SK-N-SH (cell line): ENCODE measurements at regions of chr17 and their contacts with region 1.

Region 1: GRCh38 chr17:31842183-31843069 is 16.6 kb downstream of the COPRS start:
- DNase-seq: peak; percentile 85
- H3K4me3 ChIP-seq: no peak overlapping the region; a peak in 1 of 4 replicates
- H3K27ac ChIP-seq: peak overlapping the region; percentile 28 to 53; a peak in 3 of 4 replicates
- H3K4me1 ChIP-seq: peaks cover 4 to 11% of the 10 kb centered on the region in 2 experiments; a peak in 2 of 4 replicates
- H3K27me3 ChIP-seq: no peaks in the 10 kb centered on the region
- CTCF ChIP-seq: peak; percentile 97
- EP300 ChIP-seq: no peak
- RAD21 ChIP-seq: peak; percentile 98

Region 2: DNA sequence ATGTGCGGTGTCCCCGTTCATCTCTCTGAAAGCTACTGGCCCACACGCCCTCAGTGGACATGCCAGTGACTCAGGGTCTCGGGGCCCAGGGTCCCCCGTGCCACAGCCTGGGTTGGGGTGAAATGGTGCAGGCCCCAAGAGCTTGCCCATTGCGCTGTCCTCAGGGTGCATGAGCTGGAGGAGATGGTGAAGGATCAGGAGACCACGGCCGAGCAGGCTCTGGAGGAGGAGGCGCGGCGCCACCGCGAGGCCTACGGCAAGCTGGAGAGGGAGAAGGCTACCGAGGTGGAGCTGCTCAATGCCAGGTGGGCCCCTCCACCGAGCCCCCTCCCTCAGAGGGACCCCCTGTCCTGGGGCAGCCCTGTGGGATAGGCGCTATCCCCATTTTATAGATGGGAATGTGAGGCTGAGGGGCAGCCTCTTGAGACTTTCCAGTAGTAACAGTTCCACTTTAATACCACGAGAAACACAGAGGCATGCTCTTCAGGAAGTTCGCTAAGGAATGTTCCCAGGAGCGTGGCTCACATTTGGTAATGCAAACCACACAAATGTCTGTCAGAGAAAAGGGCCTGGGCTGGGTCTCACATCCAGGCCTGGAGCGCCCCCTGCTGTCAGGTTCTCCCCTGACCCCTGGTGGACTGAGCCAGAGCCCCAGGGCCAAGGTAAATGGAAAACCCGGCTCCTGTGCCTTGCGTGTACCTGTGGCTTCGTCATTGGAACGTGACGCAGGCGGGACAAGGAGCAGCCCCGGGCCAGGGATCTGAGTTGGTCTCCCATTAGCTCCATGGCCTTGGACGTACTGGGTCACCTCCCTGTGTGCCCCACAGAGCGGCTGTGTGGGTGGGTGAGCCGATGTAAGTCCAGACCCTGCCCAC is 317.3 kb before region 1 on chr17:
- CTCF ChIA-PET with region 1: interaction called, 137 read pairs
- POLR2A ChIA-PET with region 1: no interaction called
- DNase-seq: peak; percentile 91
- H3K4me3 ChIP-seq: no peak overlapping the region; a peak in 1 of 4 replicates
- H3K27ac ChIP-seq: 0 out of 4 replicates have a peak overlapping the region, but pooled peaks of 1 of the 2 experiments have one; percentile 18
- H3K4me1 ChIP-seq: peaks cover 3 to 12% of the 10 kb centered on the region in 2 experiments; a peak in 1 of 4 replicates
- H3K27me3 ChIP-seq: no peaks in the 10 kb centered on the region
- CTCF ChIP-seq: peak; percentile 89
- EP300 ChIP-seq: no peak
- RAD21 ChIP-seq: peak; percentile 93

Region 3: DNA sequence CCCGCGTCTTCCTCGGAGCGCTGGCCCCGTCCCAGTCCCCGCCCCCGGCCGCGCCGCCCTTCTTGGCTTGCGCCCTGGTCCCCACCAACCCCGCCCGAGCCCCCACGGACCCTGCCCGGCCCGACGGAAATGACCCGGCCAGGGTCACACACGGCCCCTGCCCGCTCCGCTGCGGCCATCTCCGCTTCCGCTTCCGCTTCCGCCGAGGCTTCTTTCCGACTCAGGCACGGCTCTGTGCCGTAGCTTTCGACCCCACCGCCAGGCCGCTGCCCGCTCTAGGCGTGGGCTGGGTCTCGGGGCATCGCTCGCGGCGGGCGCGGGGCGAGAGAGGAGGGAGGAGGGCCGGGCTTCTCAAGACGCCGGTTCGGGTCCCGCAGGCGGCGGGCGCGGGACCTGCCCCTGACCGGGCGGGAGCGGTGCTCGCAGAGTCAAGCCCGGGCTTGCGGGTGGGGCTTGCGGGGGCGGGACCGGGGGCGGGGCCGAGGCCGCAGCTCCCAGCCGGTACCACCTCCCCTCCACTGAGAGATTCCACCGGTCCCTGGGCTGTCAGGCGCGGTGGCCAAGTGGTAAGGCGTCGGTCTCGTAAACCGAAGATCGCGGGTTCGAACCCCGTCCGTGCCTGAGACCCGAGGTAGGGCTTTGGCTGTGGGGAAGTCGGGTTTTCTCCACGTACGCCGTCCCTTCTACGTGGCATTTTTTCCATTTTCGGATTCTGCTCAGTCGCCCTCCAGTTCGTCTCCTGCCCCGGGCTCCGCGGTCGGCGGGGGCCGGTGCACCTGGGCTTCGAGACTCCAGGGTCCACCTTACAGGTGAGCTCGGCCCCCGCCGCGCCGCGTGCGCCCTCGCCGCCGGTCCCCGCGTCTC is 292.7 kb before region 1 on chr17:
- CTCF ChIA-PET with region 1: interaction called, 338 read pairs
- POLR2A ChIA-PET with region 1: interaction called, 3 read pairs
- DNase-seq: peak; percentile 98
- H3K4me3 ChIP-seq: peak overlapping the region; percentile 79 to 93
- H3K27ac ChIP-seq: peak overlapping the region; percentile 74 to 92
- H3K4me1 ChIP-seq: no peaks in the 10 kb centered on the region
- H3K27me3 ChIP-seq: no peaks in the 10 kb centered on the region
- CTCF ChIP-seq: no peak
- EP300 ChIP-seq: peak in 1 of 2 experiments; percentile 15; a peak in 2 of 4 replicates
- RAD21 ChIP-seq: no peak

Region 4: GRCh38 chr17:31581022-31581490 is 261.4 kb before region 1 on chr17:
- CTCF ChIA-PET with region 1: interaction called, 22 read pairs
- POLR2A ChIA-PET with region 1: no interaction called
- DNase-seq: peak; percentile 84
- H3K4me3 ChIP-seq: peak overlapping the region in 1 of 2 experiments; percentile 24; a peak in 1 of 4 replicates
- H3K27ac ChIP-seq: peak overlapping the region; percentile 92 to 96
- H3K4me1 ChIP-seq: peaks cover 31 to 44% of the 10 kb centered on the region in 2 experiments; a peak in 3 of 4 replicates
- H3K27me3 ChIP-seq: no peaks in the 10 kb centered on the region
- CTCF ChIP-seq: no peak
- EP300 ChIP-seq: peak in 1 of 2 experiments; percentile 64
- RAD21 ChIP-seq: peak; percentile 34

Region 5: GRCh38 chr17:31696184-31696602 is 146.2 kb before region 1 on chr17:
- CTCF ChIA-PET with region 1: interaction called, 24 read pairs
- POLR2A ChIA-PET with region 1: no interaction called
- DNase-seq: peak; percentile 90
- H3K4me3 ChIP-seq: no peak overlapping the region
- H3K27ac ChIP-seq: peak overlapping the region; percentile 84 to 89
- H3K4me1 ChIP-seq: peaks cover 23 to 24% of the 10 kb centered on the region in 2 experiments
- H3K27me3 ChIP-seq: no peaks in the 10 kb centered on the region
- CTCF ChIP-seq: peak; percentile 34; the same call in 1 of the 2 replicates
- EP300 ChIP-seq: peak; percentile 96 to 100
- RAD21 ChIP-seq: peak; percentile 49